Activated CD4-positive, alpha-beta memory T cell treated with anti-CD3 and anti-CD28 coated beads for 36 hours (primary cell): ENCODE measurements at regions of chr17 and their contacts with region 1.

Region 1: GRCh38 chr17:57243171-57243948 is 13.0 kb upstream of the MSI2 start:
- DNase-seq: peak; percentile 86
- H3K4me3 Mint-ChIP-seq: no peak overlapping the region
- H3K27ac Mint-ChIP-seq: no peak overlapping the region
- H3K4me1 Mint-ChIP-seq: no peaks in the 10 kb centered on the region
- H3K27me3 Mint-ChIP-seq: peaks cover 2% of the 10 kb centered on the region

Region 2: DNA sequence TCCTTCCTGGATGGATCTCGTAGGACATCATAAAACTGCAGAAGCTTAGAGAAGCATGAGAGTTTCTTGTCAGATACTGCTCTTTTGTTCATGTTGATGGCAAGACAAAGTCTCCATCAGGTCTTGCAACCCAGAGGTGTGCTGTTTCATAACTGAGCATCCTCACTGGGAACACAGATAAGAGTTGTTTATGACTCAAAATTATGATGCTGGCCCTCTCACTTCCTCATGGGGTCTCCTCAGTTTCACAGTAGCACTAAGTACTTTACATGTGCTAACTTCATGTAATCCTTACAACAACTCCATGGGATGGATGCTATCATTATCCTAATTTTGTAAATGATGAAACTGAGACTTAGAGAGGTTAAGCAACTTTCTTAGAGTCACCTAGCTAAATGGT is 251.0 kb before region 1 on chr17:
- CTCF ChIA-PET with region 1: no interaction called
- POLR2A ChIA-PET with region 1: no interaction called
- intact Hi-C with region 1: no loop called
- DNase-seq: no peak
- H3K4me3 Mint-ChIP-seq: no peak overlapping the region
- H3K27ac Mint-ChIP-seq: no peak overlapping the region
- H3K4me1 Mint-ChIP-seq: no peaks in the 10 kb centered on the region
- H3K27me3 Mint-ChIP-seq: no peaks in the 10 kb centered on the region

Region 3: GRCh38 chr17:57130761-57131461 is 112.4 kb before region 1 on chr17:
- CTCF ChIA-PET with region 1: interaction called, 13 read pairs
- POLR2A ChIA-PET with region 1: interaction called, 3 read pairs
- intact Hi-C with region 1: loop called (anchors 5 kb)
- DNase-seq: peak; percentile 86
- H3K4me3 Mint-ChIP-seq: no peak overlapping the region
- H3K27ac Mint-ChIP-seq: no peak overlapping the region
- H3K4me1 Mint-ChIP-seq: peaks cover 4% of the 10 kb centered on the region
- H3K27me3 Mint-ChIP-seq: no peaks in the 10 kb centered on the region

Region 4: GRCh38 chr17:57271821-57272220 is 28.5 kb after region 1 on chr17:
- CTCF ChIA-PET with region 1: interaction called, 14 read pairs
- POLR2A ChIA-PET with region 1: no interaction called
- intact Hi-C with region 1: no loop called
- DNase-seq: no peak
- H3K4me3 Mint-ChIP-seq: no peak overlapping the region
- H3K27ac Mint-ChIP-seq: no peak overlapping the region
- H3K4me1 Mint-ChIP-seq: peaks cover 40% of the 10 kb centered on the region
- H3K27me3 Mint-ChIP-seq: no peaks in the 10 kb centered on the region

Region 5: GRCh38 chr17:57408071-57408811 is 164.9 kb after region 1 on chr17:
- CTCF ChIA-PET with region 1: interaction called, 12 read pairs
- POLR2A ChIA-PET with region 1: no interaction called
- intact Hi-C with region 1: no loop called
- DNase-seq: peak; percentile 56
- H3K4me3 Mint-ChIP-seq: no peak overlapping the region
- H3K27ac Mint-ChIP-seq: no peak overlapping the region
- H3K4me1 Mint-ChIP-seq: peaks cover 40% of the 10 kb centered on the region
- H3K27me3 Mint-ChIP-seq: no peaks in the 10 kb centered on the region

Region 6: GRCh38 chr17:57463103-57463851 is 219.9 kb after region 1 on chr17:
- CTCF ChIA-PET with region 1: interaction called, 8 read pairs
- POLR2A ChIA-PET with region 1: no interaction called
- intact Hi-C with region 1: loop called (anchors 5 kb)
- DNase-seq: peak; percentile 95
- H3K4me3 Mint-ChIP-seq: peak overlapping the region; percentile 57
- H3K27ac Mint-ChIP-seq: peak overlapping the region; percentile 96
- H3K4me1 Mint-ChIP-seq: peaks cover 68% of the 10 kb centered on the region
- H3K27me3 Mint-ChIP-seq: no peaks in the 10 kb centered on the region

Region 7: GRCh38 chr17:57515656-57516211 is 272.4 kb after region 1 on chr17:
- CTCF ChIA-PET with region 1: interaction called, 7 read pairs
- POLR2A ChIA-PET with region 1: no interaction called
- intact Hi-C with region 1: loop called (anchors 1 kb)
- DNase-seq: no peak
- H3K4me3 Mint-ChIP-seq: no peak overlapping the region
- H3K27ac Mint-ChIP-seq: no peak overlapping the region
- H3K4me1 Mint-ChIP-seq: peaks cover 22% of the 10 kb centered on the region
- H3K27me3 Mint-ChIP-seq: no peaks in the 10 kb centered on the region

Region 8: GRCh38 chr17:57747221-57748017 is 504.1 kb after region 1 on chr17:
- CTCF ChIA-PET with region 1: interaction called, 88 read pairs
- POLR2A ChIA-PET with region 1: no interaction called
- intact Hi-C with region 1: loop called (anchors 1 kb)
- DNase-seq: peak; percentile 53
- H3K4me3 Mint-ChIP-seq: no peak overlapping the region
- H3K27ac Mint-ChIP-seq: no peak overlapping the region
- H3K4me1 Mint-ChIP-seq: no peaks in the 10 kb centered on the region
- H3K27me3 Mint-ChIP-seq: peaks cover 2% of the 10 kb centered on the region